ENCODE measurements at regions of chr14 and their contacts with region 1.

Region 1: GRCh38 chr14:73728717-73729330 is 14.6 kb upstream of the PNMA1 start:
- DNase-seq: peak; percentile 77
- ATAC-seq: peak; percentile 93
- H3K4me3 Mint-ChIP-seq: no peak overlapping the region
- H3K27ac Mint-ChIP-seq: peak overlapping the region; percentile 70
- H3K4me1 Mint-ChIP-seq: peaks cover 10% of the 10 kb centered on the region
- H3K27me3 Mint-ChIP-seq: no peaks in the 10 kb centered on the region
- CTCF ChIP-seq: peak; percentile 75

Region 2: DNA sequence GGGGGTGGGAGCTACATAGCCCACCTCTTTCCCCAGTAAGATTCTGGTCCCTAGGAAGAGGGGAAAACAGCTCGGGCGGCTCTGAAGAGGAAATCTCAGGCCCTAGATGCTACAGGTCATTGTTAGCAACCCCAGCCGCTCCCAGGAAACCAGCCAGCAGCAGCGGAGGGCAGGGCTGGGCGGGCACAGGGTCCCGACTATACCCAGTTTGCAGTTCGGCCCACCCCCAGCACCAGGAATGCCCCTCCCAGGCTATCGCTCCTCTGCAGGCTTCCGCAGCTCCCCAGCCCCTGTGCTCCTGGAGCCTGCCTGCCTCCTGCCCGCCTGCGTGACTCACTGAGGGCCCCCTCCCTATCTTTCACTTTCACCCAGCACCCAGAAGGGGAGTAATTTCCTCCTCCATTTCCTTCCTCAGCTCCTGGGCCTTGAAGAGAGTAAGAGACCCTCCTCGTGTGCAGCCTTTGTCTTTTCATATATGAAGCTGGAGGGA is 12.6 kb after region 1 on chr14:
- CTCF ChIA-PET with region 1: interaction called, 78 read pairs
- POLR2A ChIA-PET with region 1: interaction called, 4 read pairs
- intact Hi-C with region 1: no loop called
- DNase-seq: no peak
- ATAC-seq: peak; percentile 72
- H3K4me3 Mint-ChIP-seq: peak overlapping the region; percentile 76
- H3K27ac Mint-ChIP-seq: peak overlapping the region; percentile 91
- H3K4me1 Mint-ChIP-seq: peaks cover 67% of the 10 kb centered on the region
- H3K27me3 Mint-ChIP-seq: no peaks in the 10 kb centered on the region
- CTCF ChIP-seq: no peak

Region 3: GRCh38 chr14:73759714-73760597 is 31.1 kb after region 1 on chr14:
- CTCF ChIA-PET with region 1: interaction called, 43 read pairs
- POLR2A ChIA-PET with region 1: interaction called, 25 read pairs
- intact Hi-C with region 1: loop called (anchors 1 kb)
- DNase-seq: peak; percentile 95
- ATAC-seq: peak; percentile 64
- H3K4me3 Mint-ChIP-seq: peak overlapping the region; percentile 89
- H3K27ac Mint-ChIP-seq: peak overlapping the region; percentile 99
- H3K4me1 Mint-ChIP-seq: peaks cover 86% of the 10 kb centered on the region
- H3K27me3 Mint-ChIP-seq: no peaks in the 10 kb centered on the region
- CTCF ChIP-seq: no peak

Region 4: GRCh38 chr14:73777401-73777800 is 48.6 kb after region 1 on chr14:
- CTCF ChIA-PET with region 1: interaction called, 90 read pairs
- POLR2A ChIA-PET with region 1: interaction called, 5 read pairs
- intact Hi-C with region 1: loop called (anchors 1 kb)
- DNase-seq: no peak
- ATAC-seq: peak; percentile 80
- H3K4me3 Mint-ChIP-seq: peak overlapping the region; percentile 12
- H3K27ac Mint-ChIP-seq: peak overlapping the region; percentile 67
- H3K4me1 Mint-ChIP-seq: peaks cover 69% of the 10 kb centered on the region
- H3K27me3 Mint-ChIP-seq: no peaks in the 10 kb centered on the region
- CTCF ChIP-seq: no peak

Region 5: GRCh38 chr14:73825551-73826188 is 96.8 kb after region 1 on chr14:
- CTCF ChIA-PET with region 1: interaction called, 126 read pairs
- POLR2A ChIA-PET with region 1: interaction called, 17 read pairs
- intact Hi-C with region 1: loop called (anchors 1 kb)
- DNase-seq: peak; percentile 61
- ATAC-seq: peak; percentile 99
- H3K4me3 Mint-ChIP-seq: no peak overlapping the region
- H3K27ac Mint-ChIP-seq: no peak overlapping the region
- H3K4me1 Mint-ChIP-seq: peaks cover 6% of the 10 kb centered on the region
- H3K27me3 Mint-ChIP-seq: no peaks in the 10 kb centered on the region
- CTCF ChIP-seq: peak; percentile 96

Region 6: DNA sequence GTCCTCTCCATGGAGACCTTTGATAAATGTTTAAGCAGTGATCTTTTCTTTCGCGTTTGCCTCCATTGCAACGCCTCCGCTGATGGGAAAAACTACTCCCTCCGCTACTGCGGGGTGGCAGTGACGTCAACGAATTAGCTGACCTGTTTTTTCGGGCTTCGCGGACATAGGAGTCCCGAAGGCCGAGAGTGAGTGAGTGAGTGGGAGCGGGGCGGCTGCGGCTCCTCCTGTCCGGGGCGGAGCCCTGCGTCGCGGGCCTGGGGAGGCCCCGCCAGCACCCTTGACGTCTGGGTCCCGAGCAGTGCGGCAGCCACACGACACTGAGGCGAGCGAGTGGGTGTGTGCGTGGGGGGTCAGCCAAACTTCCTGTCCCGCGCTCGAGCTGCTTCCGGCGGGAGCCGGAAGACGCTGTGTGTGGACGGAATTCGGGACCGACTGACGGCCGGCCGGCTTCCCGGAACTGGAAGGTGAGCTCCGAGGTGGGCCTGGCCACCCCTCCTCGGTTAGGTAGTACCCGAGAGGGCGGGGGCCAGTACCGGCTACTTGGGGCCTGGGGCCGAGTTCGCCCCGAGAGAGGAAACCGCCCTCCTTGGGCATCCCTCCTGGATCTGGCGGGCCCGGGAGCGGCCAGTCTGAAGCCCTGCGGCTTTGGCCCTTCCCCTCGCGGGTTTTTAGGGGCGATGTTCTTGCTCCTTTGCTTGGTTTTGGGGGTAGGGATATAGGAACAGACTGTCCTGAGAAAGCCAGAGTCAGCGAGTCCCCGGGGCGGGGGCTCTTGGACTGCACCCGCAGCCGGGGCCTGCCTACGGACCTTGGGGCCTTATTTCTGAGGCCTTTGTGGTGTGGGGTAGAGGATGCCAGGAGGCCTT is 157.9 kb after region 1 on chr14 and contains the start of gene ZNF410:
- CTCF ChIA-PET with region 1: interaction called, 13 read pairs
- POLR2A ChIA-PET with region 1: interaction called, 4 read pairs
- intact Hi-C with region 1: loop called (anchors 5 kb)
- DNase-seq: peak; percentile 79
- ATAC-seq: peak; percentile 98
- H3K4me3 Mint-ChIP-seq: peak within 1 kb of the TSS; percentile 96
- H3K27ac Mint-ChIP-seq: peak within 1 kb of the TSS; percentile 96
- H3K4me1 Mint-ChIP-seq: peaks cover 42% of the 10 kb centered on the region
- H3K27me3 Mint-ChIP-seq: no peaks in the 10 kb centered on the region
- CTCF ChIP-seq: no peak
- total RNA-seq, gene ZNF410: 58.4 and 64.7 TPM in 2 replicates

Region 7: GRCh38 chr14:73949744-73950734 is 221.2 kb after region 1 on chr14 and contains the starts of genes COQ6 and FAM161B:
- CTCF ChIA-PET with region 1: no interaction called
- POLR2A ChIA-PET with region 1: no interaction called
- intact Hi-C with region 1: loop called (anchors 5 kb)
- DNase-seq: peak; percentile 84
- ATAC-seq: peak; percentile 92
- H3K4me3 Mint-ChIP-seq: peak within 1 kb of the TSS; percentile 99
- H3K27ac Mint-ChIP-seq: peak within 1 kb of the TSS; percentile 91
- H3K4me1 Mint-ChIP-seq: peaks cover 17% of the 10 kb centered on the region
- H3K27me3 Mint-ChIP-seq: no peaks in the 10 kb centered on the region
- CTCF ChIP-seq: no peak
- total RNA-seq, gene COQ6: 23.0 and 30.7 TPM in 2 replicates
- total RNA-seq, gene FAM161B: 2.3 TPM in 2 replicates

Measured in activated B cell treated with CpG ODN at 0.5 μM for 24 hours (primary cell).